ENCODE measurements at regions of chr1 and their contacts with region 1.

Region 1: DNA sequence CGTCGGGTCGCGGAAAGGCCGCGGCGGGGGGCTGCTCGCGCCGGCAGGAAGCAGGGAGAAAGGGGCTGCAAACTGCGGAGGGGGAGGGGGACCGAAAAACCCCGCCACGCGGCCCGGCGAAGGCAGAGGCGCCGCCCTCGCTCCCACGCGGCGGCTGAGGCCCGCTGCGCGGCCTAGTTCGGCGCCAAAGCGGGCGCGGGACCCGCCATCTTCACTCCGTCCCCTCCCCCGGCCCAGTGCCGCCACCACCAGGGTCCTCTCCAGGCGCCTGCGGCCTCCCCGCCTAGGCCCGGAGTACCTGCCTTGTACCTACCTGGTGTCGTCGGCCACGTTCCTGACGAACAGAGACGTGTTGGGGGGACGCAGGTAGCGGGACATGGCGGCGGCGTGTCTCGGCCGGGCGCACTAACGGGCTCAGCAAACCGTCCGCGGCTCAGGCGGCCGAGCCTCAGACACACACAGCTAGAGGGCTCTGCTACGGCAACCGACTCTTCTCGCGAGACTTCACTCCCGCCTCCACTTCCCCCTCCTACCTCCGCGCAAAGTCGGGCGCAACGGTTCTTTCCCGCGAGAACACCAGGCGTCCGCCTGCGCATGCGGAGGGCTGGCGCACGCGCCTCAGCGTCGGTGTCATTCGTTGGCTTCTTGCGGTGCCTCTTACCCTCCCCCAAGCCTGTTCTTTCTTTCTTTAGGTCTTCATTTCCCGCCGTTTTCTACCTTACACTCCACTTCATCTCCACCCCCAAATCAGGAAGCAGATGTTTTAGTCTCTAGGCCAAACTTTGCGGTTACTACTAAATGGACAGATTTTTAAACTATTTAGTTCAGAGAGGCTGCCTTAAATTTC is at the start of gene SRSF10:
- DNase-seq: peak; percentile 99
- H3K4me3 ChIP-seq: peak within 1 kb of the TSS; percentile 79 to 100 (median 85)
- H3K27ac ChIP-seq: peak within 1 kb of the TSS; percentile 94
- H3K4me1 ChIP-seq: peaks cover 46% of the 10 kb centered on the region
- H3K27me3 ChIP-seq: no peaks in the 10 kb centered on the region
- CTCF ChIP-seq: peak in 1 of 2 donors; percentile 39
- POLR2A ChIP-seq: peak; percentile 98
- total RNA-seq, gene SRSF10: 124 and 125 TPM in 2 replicates

Region 2: GRCh38 chr1:23577056-23578004 is 402.8 kb before region 1 on chr1:
- CTCF ChIA-PET with region 1: no interaction called
- POLR2A ChIA-PET with region 1: no interaction called
- dilution Hi-C with region 1: no loop called
- intact Hi-C with region 1: no loop called
- DNase-seq: peak; percentile 74
- H3K4me3 ChIP-seq: no peak overlapping the region
- H3K27ac ChIP-seq: peak overlapping the region; percentile 60
- H3K4me1 ChIP-seq: peaks cover 18% of the 10 kb centered on the region
- H3K27me3 ChIP-seq: no peaks in the 10 kb centered on the region
- CTCF ChIP-seq: no peak
- POLR2A ChIP-seq: no peak

Region 3: GRCh38 chr1:23964790-23965740 is 15.0 kb before region 1 on chr1:
- CTCF ChIA-PET with region 1: interaction called, 4 read pairs
- POLR2A ChIA-PET with region 1: interaction called, 3 read pairs
- dilution Hi-C with region 1: no loop called
- intact Hi-C with region 1: loop called (anchors 1 kb)
- DNase-seq: peak; percentile 60
- H3K4me3 ChIP-seq: no peak overlapping the region
- H3K27ac ChIP-seq: no peak overlapping the region
- H3K4me1 ChIP-seq: peaks cover 13% of the 10 kb centered on the region
- H3K27me3 ChIP-seq: no peaks in the 10 kb centered on the region
- CTCF ChIP-seq: no peak
- POLR2A ChIP-seq: no peak

Region 4: DNA sequence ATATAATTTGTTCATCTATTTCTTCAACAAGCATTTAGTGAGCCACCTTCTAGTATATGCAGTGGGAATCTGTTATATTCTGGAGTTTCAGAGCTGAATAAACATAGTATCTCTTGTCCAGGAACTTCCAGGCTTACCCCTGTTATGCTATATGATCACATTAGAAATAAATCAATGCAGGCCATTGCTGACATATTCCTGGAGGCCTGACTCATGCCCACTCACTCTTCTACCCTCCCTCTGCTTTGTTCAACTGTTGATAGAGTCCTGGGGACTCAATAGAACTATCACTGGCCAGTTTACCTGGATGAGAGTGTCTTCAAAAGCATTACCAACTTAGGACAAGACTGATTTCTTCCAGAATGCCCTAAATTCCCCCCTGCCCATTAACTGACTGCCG is 29.3 kb after region 1 on chr1:
- CTCF ChIA-PET with region 1: interaction called, 4 read pairs
- POLR2A ChIA-PET with region 1: interaction called, 6 read pairs
- dilution Hi-C with region 1: no loop called
- intact Hi-C with region 1: loop called (anchors 1 kb)
- DNase-seq: peak; percentile 87
- H3K4me3 ChIP-seq: no peak overlapping the region
- H3K27ac ChIP-seq: peak overlapping the region; percentile 56
- H3K4me1 ChIP-seq: peaks cover 26% of the 10 kb centered on the region
- H3K27me3 ChIP-seq: no peaks in the 10 kb centered on the region
- CTCF ChIP-seq: no peak
- POLR2A ChIP-seq: peak; percentile 35

Region 5: GRCh38 chr1:24018611-24019580 is 38.8 kb after region 1 on chr1:
- CTCF ChIA-PET with region 1: interaction called, 5 read pairs
- POLR2A ChIA-PET with region 1: interaction called, 5 read pairs
- dilution Hi-C with region 1: no loop called
- intact Hi-C with region 1: loop called (anchors 1 kb)
- DNase-seq: peak; percentile 100
- H3K4me3 ChIP-seq: no peak overlapping the region
- H3K27ac ChIP-seq: peak overlapping the region; percentile 78
- H3K4me1 ChIP-seq: peaks cover 6% of the 10 kb centered on the region
- H3K27me3 ChIP-seq: no peaks in the 10 kb centered on the region
- CTCF ChIP-seq: no peak
- POLR2A ChIP-seq: no peak

Region 6: DNA sequence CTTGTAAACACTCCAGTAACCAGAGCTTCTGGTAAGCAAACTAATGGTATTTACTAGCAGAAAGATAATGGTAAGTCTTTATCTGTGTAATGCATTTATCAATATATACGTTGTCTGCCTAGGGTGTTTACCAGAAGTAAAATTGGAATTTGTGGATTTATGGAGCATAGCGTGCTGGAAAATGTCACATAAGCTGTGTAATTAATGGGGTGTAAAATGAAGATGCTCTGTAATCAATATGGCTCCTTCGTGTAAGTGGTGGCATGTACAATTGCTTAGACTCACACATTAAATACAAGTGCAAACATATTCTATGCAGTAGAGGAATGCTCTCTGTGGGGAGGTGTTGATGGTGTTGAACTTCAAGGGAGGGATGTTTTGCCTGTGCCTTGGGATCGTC is 62.2 kb after region 1 on chr1:
- CTCF ChIA-PET with region 1: no interaction called
- POLR2A ChIA-PET with region 1: no interaction called
- dilution Hi-C with region 1: no loop called
- intact Hi-C with region 1: no loop called
- DNase-seq: no peak
- H3K4me3 ChIP-seq: no peak overlapping the region
- H3K27ac ChIP-seq: no peak overlapping the region
- H3K4me1 ChIP-seq: no peaks in the 10 kb centered on the region
- H3K27me3 ChIP-seq: no peaks in the 10 kb centered on the region
- CTCF ChIP-seq: no peak
- POLR2A ChIP-seq: no peak

Measured in endothelial cell of umbilical vein (primary cell).